Activated B cell treated with CpG ODN at 0.5 μM for 24 hours (primary cell): ENCODE measurements at regions of chr16 and their contacts with region 1.

Region 1: DNA sequence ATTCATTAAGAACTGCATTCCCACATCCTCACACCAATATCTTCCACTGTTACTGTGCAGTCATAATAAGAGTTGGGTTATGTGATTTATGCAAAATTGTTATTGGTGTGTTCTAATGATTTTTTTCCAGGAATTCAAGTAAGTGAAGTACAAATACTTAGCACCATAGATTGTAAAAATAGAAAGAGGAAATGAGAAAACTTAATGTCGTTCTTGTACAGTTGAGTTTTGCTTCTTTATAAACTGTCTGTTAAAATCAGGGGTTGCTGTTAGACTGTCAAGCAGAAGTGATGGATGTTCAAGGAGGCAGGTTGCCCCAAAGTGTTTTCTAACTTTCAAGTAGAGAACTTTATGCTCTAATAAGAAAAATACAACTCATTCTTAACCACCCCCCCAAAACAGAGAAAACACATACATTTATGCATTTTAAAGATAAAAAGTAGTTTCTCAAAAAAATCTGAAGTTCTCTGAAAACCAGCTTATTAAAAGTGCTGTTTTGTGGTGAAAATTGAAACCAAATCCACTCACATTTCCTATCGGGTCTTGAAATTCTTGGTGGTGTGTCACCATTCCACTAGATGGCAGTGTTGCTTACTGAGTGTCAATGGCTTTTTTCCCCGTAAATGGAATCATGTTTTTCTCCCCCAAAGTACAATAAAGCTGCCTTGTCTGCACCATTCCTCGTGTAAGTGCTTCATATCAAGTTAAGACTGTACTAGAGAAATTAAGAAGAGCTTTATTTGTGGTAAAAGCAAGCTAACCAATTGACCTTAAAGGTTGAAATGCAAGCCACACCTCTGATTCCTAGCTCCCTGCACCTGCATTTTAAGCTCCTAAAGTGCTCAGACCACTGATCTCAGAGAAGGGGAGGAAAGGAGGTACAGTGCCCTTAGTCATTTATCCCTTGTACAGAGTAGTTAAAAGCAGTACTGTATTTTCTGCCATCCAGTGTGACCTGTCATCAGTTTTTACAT is 4.7 kb upstream of the IGSF6 start:
- DNase-seq: no peak
- ATAC-seq: peak; percentile 79
- H3K4me3 Mint-ChIP-seq: peak overlapping the region; percentile 73
- H3K27ac Mint-ChIP-seq: peak overlapping the region; percentile 86
- H3K4me1 Mint-ChIP-seq: peaks cover 88% of the 10 kb centered on the region
- H3K27me3 Mint-ChIP-seq: no peaks in the 10 kb centered on the region
- CTCF ChIP-seq: peak; percentile 97

Region 2: DNA sequence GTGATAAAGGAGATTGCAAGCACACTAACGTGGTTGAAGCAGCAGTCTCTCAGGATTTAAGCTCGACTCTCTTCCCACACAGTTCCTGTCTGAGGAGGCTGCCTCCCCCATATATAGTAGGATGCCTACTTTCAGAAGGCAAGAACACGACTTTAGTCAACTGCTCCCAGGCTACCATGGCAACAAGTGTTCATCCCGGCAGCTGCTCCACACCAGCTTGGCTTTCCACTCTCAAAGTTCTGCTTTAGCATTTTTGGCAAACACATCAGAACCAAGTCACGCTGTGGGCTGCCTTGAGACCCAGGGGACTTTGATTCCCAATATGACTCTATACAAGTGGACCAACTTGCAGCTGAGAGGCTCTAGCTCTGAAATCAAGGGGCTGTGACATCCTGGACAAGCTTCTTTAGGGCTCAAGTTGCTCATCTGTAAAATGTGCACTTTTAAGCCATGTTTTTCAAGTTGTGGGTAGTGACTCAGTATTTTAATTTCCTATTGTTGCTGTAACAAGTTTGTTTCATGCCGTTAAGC is 462.2 kb before region 1 on chr16:
- CTCF ChIA-PET with region 1: no interaction called
- POLR2A ChIA-PET with region 1: no interaction called
- intact Hi-C with region 1: no loop called
- DNase-seq: no peak
- ATAC-seq: peak; percentile 50
- H3K4me3 Mint-ChIP-seq: no peak overlapping the region
- H3K27ac Mint-ChIP-seq: no peak overlapping the region
- H3K4me1 Mint-ChIP-seq: peaks cover 16% of the 10 kb centered on the region
- H3K27me3 Mint-ChIP-seq: peaks cover 23% of the 10 kb centered on the region
- CTCF ChIP-seq: no peak

Region 3: GRCh38 chr16:21277927-21278706 is 379.0 kb before region 1 on chr16 and contains the start of gene CRYM:
- CTCF ChIA-PET with region 1: no interaction called
- POLR2A ChIA-PET with region 1: no interaction called
- intact Hi-C with region 1: no loop called
- DNase-seq: peak; percentile 76
- ATAC-seq: peak; percentile 95
- H3K4me3 Mint-ChIP-seq: peak within 1 kb of the TSS; percentile 79
- H3K27ac Mint-ChIP-seq: no peak within 1 kb of the TSS
- H3K4me1 Mint-ChIP-seq: peaks cover 46% of the 10 kb centered on the region
- H3K27me3 Mint-ChIP-seq: peaks cover 16% of the 10 kb centered on the region
- CTCF ChIP-seq: peak; percentile 42
- total RNA-seq, gene CRYM: 4.2 and 4.5 TPM in 2 replicates

Region 4: GRCh38 chr16:21584817-21585216 is 72.3 kb before region 1 on chr16:
- CTCF ChIA-PET with region 1: interaction called, 10 read pairs
- POLR2A ChIA-PET with region 1: interaction called, 3 read pairs
- intact Hi-C with region 1: no loop called
- DNase-seq: no peak
- ATAC-seq: no peak
- H3K4me3 Mint-ChIP-seq: no peak overlapping the region
- H3K27ac Mint-ChIP-seq: no peak overlapping the region
- H3K4me1 Mint-ChIP-seq: peaks cover 12% of the 10 kb centered on the region
- H3K27me3 Mint-ChIP-seq: no peaks in the 10 kb centered on the region
- CTCF ChIP-seq: no peak

Region 5: GRCh38 chr16:21638573-21638975 is 18.5 kb before region 1 on chr16:
- CTCF ChIA-PET with region 1: interaction called, 98 read pairs
- POLR2A ChIA-PET with region 1: interaction called, 34 read pairs
- intact Hi-C with region 1: loop called (anchors 2 kb)
- DNase-seq: no peak
- ATAC-seq: no peak
- H3K4me3 Mint-ChIP-seq: no peak overlapping the region
- H3K27ac Mint-ChIP-seq: no peak overlapping the region
- H3K4me1 Mint-ChIP-seq: peaks cover 8% of the 10 kb centered on the region
- H3K27me3 Mint-ChIP-seq: no peaks in the 10 kb centered on the region
- CTCF ChIP-seq: no peak

Region 6: DNA sequence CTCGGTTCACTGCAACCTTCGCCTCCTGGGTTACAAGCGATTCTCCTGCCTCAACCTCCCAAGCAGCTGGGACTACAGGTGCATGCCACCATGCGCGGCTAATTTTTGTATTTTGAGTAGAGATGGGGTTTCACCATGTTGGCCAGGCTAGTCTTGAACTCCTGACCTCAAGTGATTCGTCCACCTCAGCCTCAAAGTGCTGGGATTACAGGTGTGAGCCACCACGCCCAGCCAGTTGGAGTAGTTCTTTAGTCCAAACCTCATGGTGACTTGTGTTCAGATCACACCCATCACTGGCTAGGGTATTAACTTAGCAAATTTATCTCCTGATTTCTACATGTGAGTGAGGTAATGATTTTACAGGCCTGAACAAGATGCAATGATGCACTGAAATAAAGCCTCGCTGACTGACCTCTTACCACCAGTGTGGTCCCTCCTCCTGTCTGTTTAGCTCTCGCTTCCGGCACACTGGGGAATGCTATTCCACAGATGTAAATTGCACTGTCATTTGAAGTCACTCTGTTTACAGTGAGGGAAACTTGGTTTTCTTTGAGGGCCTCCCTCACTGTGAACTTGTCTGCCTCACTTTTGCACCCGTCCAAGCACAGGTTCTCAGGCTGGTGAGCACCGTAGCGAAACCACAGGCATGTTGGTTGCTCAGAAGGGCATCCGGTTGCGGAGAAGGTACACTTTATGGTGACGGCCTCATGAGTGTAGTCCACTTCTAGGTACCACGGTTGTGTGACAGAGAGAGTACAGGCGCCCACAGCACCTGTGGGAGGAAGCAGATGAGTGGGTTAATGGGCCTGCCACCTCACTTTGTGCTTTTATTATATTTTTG is 10.1 kb before region 1 on chr16:
- CTCF ChIA-PET with region 1: interaction called, 98 read pairs
- POLR2A ChIA-PET with region 1: interaction called, 34 read pairs
- intact Hi-C with region 1: loop called (anchors 1 kb)
- DNase-seq: peak; percentile 42
- ATAC-seq: peak; percentile 83
- H3K4me3 Mint-ChIP-seq: peak overlapping the region; percentile 53
- H3K27ac Mint-ChIP-seq: peak overlapping the region; percentile 89
- H3K4me1 Mint-ChIP-seq: peaks cover 77% of the 10 kb centered on the region
- H3K27me3 Mint-ChIP-seq: no peaks in the 10 kb centered on the region
- CTCF ChIP-seq: no peak

Region 7: GRCh38 chr16:21952793-21953540 is 295.9 kb after region 1 on chr16 and contains the start of gene UQCRC2:
- CTCF ChIA-PET with region 1: no interaction called
- POLR2A ChIA-PET with region 1: no interaction called
- intact Hi-C with region 1: loop called (anchors 5 kb)
- DNase-seq: peak; percentile 76
- ATAC-seq: peak; percentile 89
- H3K4me3 Mint-ChIP-seq: peak within 1 kb of the TSS; percentile 98
- H3K27ac Mint-ChIP-seq: peak within 1 kb of the TSS; percentile 98
- H3K4me1 Mint-ChIP-seq: peaks cover 65% of the 10 kb centered on the region
- H3K27me3 Mint-ChIP-seq: no peaks in the 10 kb centered on the region
- CTCF ChIP-seq: no peak
- total RNA-seq, gene UQCRC2: 207 and 230 TPM in 2 replicates